ENCODE measurements at regions of chr1 and their contacts with region 1.

Region 1: DNA sequence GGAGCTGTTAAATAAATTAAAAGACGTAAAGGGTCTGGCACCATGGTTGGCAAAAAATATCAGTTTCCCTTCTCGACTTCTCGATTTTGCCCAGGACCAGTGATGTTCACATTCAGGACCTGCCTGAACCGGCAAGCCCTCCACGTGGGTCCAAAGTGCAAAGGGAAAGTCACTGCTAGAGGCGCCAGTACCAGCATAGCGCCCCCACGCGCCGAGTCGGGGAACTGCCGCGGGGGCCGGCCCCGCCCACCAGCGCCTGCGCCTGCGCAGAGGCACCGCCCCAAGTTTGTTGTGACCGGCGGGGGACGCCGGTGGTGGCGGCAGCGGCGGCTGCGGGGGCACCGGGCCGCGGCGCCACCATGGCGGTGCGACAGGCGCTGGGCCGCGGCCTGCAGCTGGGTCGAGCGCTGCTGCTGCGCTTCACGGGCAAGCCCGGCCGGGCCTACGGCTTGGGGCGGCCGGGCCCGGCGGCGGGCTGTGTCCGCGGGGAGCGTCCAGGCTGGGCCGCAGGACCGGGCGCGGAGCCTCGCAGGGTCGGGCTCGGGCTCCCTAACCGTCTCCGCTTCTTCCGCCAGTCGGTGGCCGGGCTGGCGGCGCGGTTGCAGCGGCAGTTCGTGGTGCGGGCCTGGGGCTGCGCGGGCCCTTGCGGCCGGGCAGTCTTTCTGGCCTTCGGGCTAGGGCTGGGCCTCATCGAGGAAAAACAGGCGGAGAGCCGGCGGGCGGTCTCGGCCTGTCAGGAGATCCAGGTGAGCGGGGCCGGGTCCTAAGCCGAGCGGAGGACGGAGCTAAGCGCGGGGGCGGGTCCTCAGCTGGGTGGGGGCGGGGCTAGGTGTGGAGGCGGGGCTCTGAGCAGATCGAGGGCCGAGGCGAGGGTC is at the start of gene PINK1:
- DNase-seq: peak; percentile 91
- ATAC-seq: peak; percentile 82
- H3K4me3 Mint-ChIP-seq: peak within 1 kb of the TSS; percentile 72
- H3K27ac Mint-ChIP-seq: peak within 1 kb of the TSS; percentile 72
- H3K4me1 Mint-ChIP-seq: peaks cover 9% of the 10 kb centered on the region
- H3K27me3 Mint-ChIP-seq: no peaks in the 10 kb centered on the region
- total RNA-seq, gene PINK1: 2.5 to 3.2 TPM

Region 2: GRCh38 chr1:20376880-20377494 is 256.4 kb before region 1 on chr1:
- CTCF ChIA-PET with region 1: interaction called, 3 read pairs
- POLR2A ChIA-PET with region 1: no interaction called
- intact Hi-C with region 1: loop called in 1 of 2 experiments (anchors 10 kb)
- DNase-seq: peak; percentile 82
- ATAC-seq: peak; percentile 85
- H3K4me3 Mint-ChIP-seq: no peak overlapping the region
- H3K27ac Mint-ChIP-seq: no peak overlapping the region
- H3K4me1 Mint-ChIP-seq: peaks cover 7% of the 10 kb centered on the region
- H3K27me3 Mint-ChIP-seq: peaks cover 17% of the 10 kb centered on the region

Region 3: GRCh38 chr1:20507564-20508410 is 125.6 kb before region 1 on chr1 and contains the start of gene MUL1:
- CTCF ChIA-PET with region 1: no interaction called
- POLR2A ChIA-PET with region 1: no interaction called
- intact Hi-C with region 1: loop called (anchors 1 to 5 kb)
- DNase-seq: peak; percentile 96
- ATAC-seq: peak; percentile 96
- H3K4me3 Mint-ChIP-seq: peak within 1 kb of the TSS; percentile 79
- H3K27ac Mint-ChIP-seq: peak within 1 kb of the TSS; percentile 65
- H3K4me1 Mint-ChIP-seq: peaks cover 17% of the 10 kb centered on the region
- H3K27me3 Mint-ChIP-seq: peaks cover 2% of the 10 kb centered on the region
- total RNA-seq, gene MUL1: 9.0 to 13.1 TPM

Region 4: GRCh38 chr1:20521960-20522861 is 111.2 kb before region 1 on chr1:
- CTCF ChIA-PET with region 1: interaction called, 19 read pairs
- POLR2A ChIA-PET with region 1: no interaction called
- intact Hi-C with region 1: loop called (anchors 1 kb)
- DNase-seq: peak; percentile 82
- ATAC-seq: no peak
- H3K4me3 Mint-ChIP-seq: no peak overlapping the region
- H3K27ac Mint-ChIP-seq: no peak overlapping the region
- H3K4me1 Mint-ChIP-seq: no peaks in the 10 kb centered on the region
- H3K27me3 Mint-ChIP-seq: peaks cover 12% of the 10 kb centered on the region

Region 5: GRCh38 chr1:20574686-20575540 is 58.5 kb before region 1 on chr1:
- CTCF ChIA-PET with region 1: interaction called, 30 read pairs
- POLR2A ChIA-PET with region 1: no interaction called
- intact Hi-C with region 1: loop called (anchors 1 to 2 kb)
- DNase-seq: peak; percentile 90
- ATAC-seq: peak; percentile 91
- H3K4me3 Mint-ChIP-seq: no peak overlapping the region
- H3K27ac Mint-ChIP-seq: no peak overlapping the region
- H3K4me1 Mint-ChIP-seq: peaks cover 3% of the 10 kb centered on the region
- H3K27me3 Mint-ChIP-seq: peaks cover 22% of the 10 kb centered on the region

Region 6: GRCh38 chr1:20661207-20662109 is 28.0 kb after region 1 on chr1 and contains the start of gene DDOST:
- CTCF ChIA-PET with region 1: interaction called, 24 read pairs
- POLR2A ChIA-PET with region 1: no interaction called
- intact Hi-C with region 1: loop called (anchors 1 kb)
- DNase-seq: peak; percentile 97
- ATAC-seq: peak; percentile 97
- H3K4me3 Mint-ChIP-seq: peak within 1 kb of the TSS; percentile 91
- H3K27ac Mint-ChIP-seq: peak within 1 kb of the TSS; percentile 100
- H3K4me1 Mint-ChIP-seq: peaks cover 35% of the 10 kb centered on the region
- H3K27me3 Mint-ChIP-seq: no peaks in the 10 kb centered on the region
- total RNA-seq, gene DDOST: 112 to 136 TPM

Region 7: GRCh38 chr1:20732588-20733360 is 99.3 kb after region 1 on chr1 and contains the start of gene SH2D5:
- CTCF ChIA-PET with region 1: interaction called, 7 read pairs
- POLR2A ChIA-PET with region 1: interaction called, 5 read pairs
- intact Hi-C with region 1: loop called in 1 of 2 experiments (anchors 1 kb)
- DNase-seq: peak; percentile 87
- ATAC-seq: peak; percentile 88
- H3K4me3 Mint-ChIP-seq: peak within 1 kb of the TSS; percentile 74
- H3K27ac Mint-ChIP-seq: peak within 1 kb of the TSS; percentile 69
- H3K4me1 Mint-ChIP-seq: peaks cover 17% of the 10 kb centered on the region
- H3K27me3 Mint-ChIP-seq: peaks cover 21% of the 10 kb centered on the region
- total RNA-seq, gene SH2D5: 0.32 to 0.51 TPM

Measured in activated CD4-positive, alpha-beta T cell treated with anti-CD3 and anti-CD28 coated beads for 36 hours (primary cell).